Caco-2 (cell line): ENCODE measurements at regions of chr14 and their contacts with region 1.

Region 1: GRCh38 chr14:24146978-24147760 is at the start of gene RNF31:
- DNase-seq: peak; percentile 97 to 98
- H3K4me3 ChIP-seq: peak within 1 kb of the TSS; percentile 95
- H3K4me3 Mint-ChIP-seq: peak within 1 kb of the TSS; percentile 92
- H3K27ac Mint-ChIP-seq: peak within 1 kb of the TSS; percentile 65
- H3K4me1 ChIP-seq: peaks cover 6% of the 10 kb centered on the region
- H3K4me1 Mint-ChIP-seq: peaks cover 14% of the 10 kb centered on the region
- H3K27me3 ChIP-seq: no peaks in the 10 kb centered on the region
- H3K27me3 Mint-ChIP-seq: no peaks in the 10 kb centered on the region
- CTCF ChIP-seq: peak in 1 of 2 experiments; percentile 15
- total RNA-seq, gene RNF31: 72.2 and 77.6 TPM in 2 replicates

Region 2: GRCh38 chr14:24114536-24115450 is 32.4 kb before region 1 on chr14 and contains the starts of genes DCAF11 and NRL:
- CTCF ChIA-PET with region 1: interaction called, 17 read pairs
- POLR2A ChIA-PET with region 1: interaction called, 46 read pairs
- intact Hi-C with region 1: loop called (anchors 1 kb)
- DNase-seq: peak; percentile 98 to 99
- H3K4me3 ChIP-seq: peak within 1 kb of the TSS; percentile 77
- H3K4me3 Mint-ChIP-seq: peak within 1 kb of the TSS; percentile 100
- H3K27ac Mint-ChIP-seq: peak within 1 kb of the TSS; percentile 98
- H3K4me1 ChIP-seq: no peaks in the 10 kb centered on the region
- H3K4me1 Mint-ChIP-seq: peaks cover 13% of the 10 kb centered on the region
- H3K27me3 ChIP-seq: no peaks in the 10 kb centered on the region
- H3K27me3 Mint-ChIP-seq: no peaks in the 10 kb centered on the region
- CTCF ChIP-seq: no peak
- total RNA-seq, gene DCAF11: 58.1 and 65.9 TPM in 2 replicates
- total RNA-seq, gene NRL: 2.1 and 2.3 TPM in 2 replicates

Region 3: GRCh38 chr14:24160850-24161804 is 14.0 kb after region 1 on chr14 and contains the start of gene IRF9:
- CTCF ChIA-PET with region 1: interaction called, 47 read pairs
- POLR2A ChIA-PET with region 1: interaction called, 15 read pairs
- intact Hi-C with region 1: loop called (anchors 1 kb)
- DNase-seq: peak; percentile 95 to 96
- H3K4me3 ChIP-seq: peak within 1 kb of the TSS; percentile 29
- H3K4me3 Mint-ChIP-seq: peak within 1 kb of the TSS; percentile 77
- H3K27ac Mint-ChIP-seq: peak within 1 kb of the TSS; percentile 82
- H3K4me1 ChIP-seq: peaks cover 12% of the 10 kb centered on the region
- H3K4me1 Mint-ChIP-seq: peaks cover 6% of the 10 kb centered on the region
- H3K27me3 ChIP-seq: no peaks in the 10 kb centered on the region
- H3K27me3 Mint-ChIP-seq: no peaks in the 10 kb centered on the region
- CTCF ChIP-seq: peak; percentile 88
- total RNA-seq, gene IRF9: 54.1 and 55.4 TPM in 2 replicates

Region 4: GRCh38 chr14:24195191-24196070 is 48.3 kb after region 1 on chr14 and contains the start of gene TM9SF1:
- CTCF ChIA-PET with region 1: interaction called, 3 read pairs
- POLR2A ChIA-PET with region 1: interaction called, 14 read pairs
- intact Hi-C with region 1: no loop called
- DNase-seq: peak; percentile 88 to 90
- H3K4me3 ChIP-seq: peak within 1 kb of the TSS; percentile 95
- H3K4me3 Mint-ChIP-seq: peak within 1 kb of the TSS; percentile 84
- H3K27ac Mint-ChIP-seq: peak within 1 kb of the TSS; percentile 88
- H3K4me1 ChIP-seq: 0 out of 2 replicates have a peak, but pooled peaks cover 9% of the 10 kb centered on the region
- H3K4me1 Mint-ChIP-seq: peaks cover 11% of the 10 kb centered on the region
- H3K27me3 ChIP-seq: no peaks in the 10 kb centered on the region
- H3K27me3 Mint-ChIP-seq: no peaks in the 10 kb centered on the region
- CTCF ChIP-seq: no peak
- total RNA-seq, gene TM9SF1: 41.9 and 47.1 TPM in 2 replicates

Region 5: DNA sequence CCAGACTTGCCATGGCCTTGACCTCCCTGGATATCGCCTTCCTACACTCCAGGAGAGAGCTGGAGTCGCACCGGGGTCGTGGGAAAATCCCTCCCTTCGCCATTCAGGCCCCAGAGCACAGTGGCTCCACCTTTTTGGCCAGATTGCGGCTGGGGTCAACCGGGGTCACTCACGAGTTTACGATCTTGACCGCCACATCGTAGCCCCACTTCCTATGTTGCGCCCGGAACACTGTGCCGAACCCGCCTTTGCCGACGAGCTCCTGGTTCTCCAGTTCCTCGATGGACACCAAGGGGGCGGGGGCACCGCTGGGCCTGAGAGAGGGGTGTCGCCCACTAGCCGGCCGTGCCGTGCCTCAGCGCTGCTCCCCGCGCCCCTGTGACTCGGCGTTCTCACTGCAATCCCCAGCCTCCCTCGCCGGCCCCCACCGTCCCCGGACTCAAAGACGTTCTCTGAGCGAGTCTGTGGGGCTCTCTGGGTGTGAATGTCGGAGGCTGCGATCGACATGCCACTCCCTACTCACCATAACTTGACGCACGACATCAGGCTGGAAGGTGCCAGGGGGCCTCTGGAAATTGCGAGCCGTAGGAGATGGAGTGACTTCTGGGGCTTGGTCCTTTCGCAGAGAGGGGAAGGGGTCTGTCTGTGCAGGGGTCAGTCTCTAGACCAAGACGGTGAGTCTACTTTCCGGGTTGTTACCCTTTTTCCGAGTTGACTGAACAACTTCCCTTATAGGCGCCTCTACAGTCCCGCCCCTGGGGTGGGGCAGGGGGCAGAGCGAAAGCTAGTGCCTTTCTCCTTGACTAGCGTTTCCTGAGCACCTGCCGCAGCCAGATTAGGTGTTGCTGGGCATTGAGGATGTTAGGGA is 192.3 kb after region 1 on chr14 and contains the start of gene RIPK3:
- CTCF ChIA-PET with region 1: no interaction called
- POLR2A ChIA-PET with region 1: no interaction called
- intact Hi-C with region 1: no loop called
- DNase-seq: no peak
- H3K4me3 ChIP-seq: peak within 1 kb of the TSS; percentile 37
- H3K4me3 Mint-ChIP-seq: peak within 1 kb of the TSS; percentile 60
- H3K27ac Mint-ChIP-seq: no peak within 1 kb of the TSS
- H3K4me1 ChIP-seq: 0 out of 2 replicates have a peak, but pooled peaks cover 7% of the 10 kb centered on the region
- H3K4me1 Mint-ChIP-seq: peaks cover 6% of the 10 kb centered on the region
- H3K27me3 ChIP-seq: no peaks in the 10 kb centered on the region; the same call in 1 of the 2 replicates
- H3K27me3 Mint-ChIP-seq: peaks cover 3% of the 10 kb centered on the region
- CTCF ChIP-seq: no peak
- total RNA-seq, gene RIPK3: 1.5 TPM in 2 replicates